AG04450 (cell line): ENCODE measurements at regions of chr3 and their contacts with region 1.

Region 1: DNA sequence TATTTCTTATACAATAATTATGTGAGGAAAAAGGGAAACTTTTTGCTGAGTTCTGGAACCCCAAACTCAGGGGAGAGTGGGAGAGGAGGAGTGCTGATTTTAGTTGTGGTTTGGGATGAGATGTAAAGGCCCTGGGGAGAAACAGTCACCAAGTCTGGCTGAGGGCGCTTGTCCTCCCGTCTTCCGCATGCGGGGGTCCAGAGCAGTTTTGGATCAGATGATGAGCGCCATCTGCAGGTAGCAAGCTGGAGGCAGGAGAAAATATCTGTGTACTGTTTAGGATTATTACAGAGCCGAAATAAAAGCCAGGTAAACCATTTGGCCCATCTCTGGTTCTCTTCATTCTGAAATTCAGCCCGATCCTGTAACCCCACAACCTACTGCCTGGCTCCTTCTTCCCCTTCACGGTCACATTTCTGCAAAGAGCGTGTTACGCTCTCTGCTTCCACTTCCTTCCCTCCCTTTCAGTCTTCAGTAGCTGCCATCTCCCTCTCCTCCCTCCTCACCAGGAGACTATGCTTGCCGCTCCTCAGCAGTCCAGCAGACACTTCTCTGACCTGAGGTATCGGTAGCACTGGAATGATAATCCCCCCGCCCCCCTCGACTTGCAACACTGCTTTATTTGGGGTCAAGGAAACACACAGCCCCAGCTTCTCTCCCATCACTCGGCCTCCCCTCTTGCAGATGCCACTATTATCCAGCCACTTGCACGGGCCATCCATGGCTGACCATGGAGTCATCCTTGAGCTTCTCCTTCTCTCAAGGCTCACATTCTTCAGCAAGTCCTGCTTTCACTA is 1.4 kb upstream of the PARP14 start:
- DNase-seq: peak; percentile 55
- H3K4me3 ChIP-seq: peak overlapping the region; percentile 43
- H3K27ac ChIP-seq: peak overlapping the region; percentile 34
- H3K27me3 ChIP-seq: no peaks in the 10 kb centered on the region
- CTCF ChIP-seq: peak; percentile 87

Region 2: DNA sequence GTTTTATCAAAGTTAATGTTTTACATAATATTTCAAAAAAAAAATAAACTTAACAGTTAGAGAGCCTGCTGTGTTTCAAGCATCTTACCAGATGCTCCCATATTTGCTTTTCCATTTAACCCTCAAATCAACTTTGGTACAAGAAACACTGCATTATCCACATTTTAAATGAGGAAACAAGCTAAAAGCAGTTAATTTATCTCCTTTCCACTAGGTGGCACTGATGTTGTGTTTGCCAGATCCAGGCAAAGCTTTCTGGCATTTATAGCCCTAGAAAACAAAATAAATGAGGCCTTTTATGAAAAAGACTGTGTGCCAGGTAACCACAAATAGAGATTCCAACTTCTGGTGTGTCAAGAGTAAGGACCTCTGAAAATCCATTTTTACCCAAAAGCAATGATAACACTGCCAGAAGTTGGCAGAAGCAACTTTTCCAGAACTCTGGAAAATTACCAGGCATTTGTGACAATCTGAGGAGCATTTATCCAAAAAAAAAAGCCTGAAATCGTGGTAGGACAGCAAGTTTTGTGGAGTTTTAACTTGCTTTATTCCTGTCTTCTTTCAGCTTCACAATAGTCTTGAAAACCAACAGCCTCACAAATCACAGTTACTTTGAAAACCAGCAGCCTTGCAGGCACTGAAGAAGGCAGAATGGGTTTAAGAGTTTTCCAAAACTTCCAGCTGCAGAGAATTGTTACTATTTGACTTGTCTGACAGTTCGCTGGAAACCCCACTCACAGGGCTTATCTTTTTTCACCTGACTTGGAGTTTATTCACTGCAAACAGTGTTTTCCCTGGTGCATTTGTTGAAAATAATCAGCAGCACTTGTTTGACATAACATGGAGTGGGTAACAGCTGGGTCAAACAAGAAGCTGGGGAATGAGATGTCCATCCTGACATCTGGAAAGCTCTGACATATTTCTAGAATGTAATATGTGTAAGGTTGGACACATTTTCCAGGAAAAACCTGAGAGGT is 286.1 kb before region 1 on chr3:
- CTCF ChIA-PET with region 1: interaction called, 46 read pairs
- POLR2A ChIA-PET with region 1: no interaction called
- DNase-seq: no peak
- H3K4me3 ChIP-seq: no peak overlapping the region
- H3K27ac ChIP-seq: no peak overlapping the region
- H3K27me3 ChIP-seq: no peaks in the 10 kb centered on the region
- CTCF ChIP-seq: peak; percentile 82

Region 3: DNA sequence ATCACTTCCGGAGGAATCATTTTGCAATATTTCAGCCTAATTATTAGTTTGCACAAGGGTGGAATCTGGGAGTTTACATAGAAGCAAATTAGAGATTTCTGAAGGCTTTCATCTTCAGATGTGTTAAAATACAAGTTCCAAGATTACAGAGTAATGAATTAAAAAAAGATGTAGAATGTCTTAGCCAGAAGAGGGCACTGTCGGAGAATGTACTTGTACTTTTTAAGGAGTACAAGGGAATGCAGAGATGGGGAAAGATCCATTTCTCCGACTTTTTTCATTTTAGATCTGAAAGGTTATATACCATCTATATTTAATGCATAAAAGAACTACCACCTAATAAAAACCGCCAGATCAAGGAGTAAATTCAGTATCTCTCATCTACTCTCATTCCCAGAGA is 220.3 kb before region 1 on chr3:
- CTCF ChIA-PET with region 1: interaction called, 25 read pairs
- POLR2A ChIA-PET with region 1: interaction called, 3 read pairs
- DNase-seq: peak; percentile 27
- H3K4me3 ChIP-seq: no peak overlapping the region
- H3K27ac ChIP-seq: no peak overlapping the region
- H3K27me3 ChIP-seq: no peaks in the 10 kb centered on the region
- CTCF ChIP-seq: peak; percentile 57

Region 4: GRCh38 chr3:122621112-122621511 is 58.2 kb before region 1 on chr3:
- CTCF ChIA-PET with region 1: interaction called, 12 read pairs
- POLR2A ChIA-PET with region 1: no interaction called
- DNase-seq: no peak
- H3K4me3 ChIP-seq: no peak overlapping the region
- H3K27ac ChIP-seq: no peak overlapping the region
- H3K27me3 ChIP-seq: peaks cover 41% of the 10 kb centered on the region
- CTCF ChIP-seq: no peak

Region 5: GRCh38 chr3:122725106-122725505 is 45.8 kb after region 1 on chr3:
- CTCF ChIA-PET with region 1: no interaction called
- POLR2A ChIA-PET with region 1: no interaction called
- DNase-seq: no peak
- H3K4me3 ChIP-seq: no peak overlapping the region
- H3K27ac ChIP-seq: no peak overlapping the region
- H3K27me3 ChIP-seq: no peaks in the 10 kb centered on the region
- CTCF ChIP-seq: no peak

Region 6: GRCh38 chr3:122745346-122746021 is 66.2 kb after region 1 on chr3:
- CTCF ChIA-PET with region 1: no interaction called
- POLR2A ChIA-PET with region 1: no interaction called
- DNase-seq: peak; percentile 56
- H3K4me3 ChIP-seq: no peak overlapping the region
- H3K27ac ChIP-seq: peak overlapping the region; percentile 78
- H3K27me3 ChIP-seq: no peaks in the 10 kb centered on the region
- CTCF ChIP-seq: no peak

Region 7: DNA sequence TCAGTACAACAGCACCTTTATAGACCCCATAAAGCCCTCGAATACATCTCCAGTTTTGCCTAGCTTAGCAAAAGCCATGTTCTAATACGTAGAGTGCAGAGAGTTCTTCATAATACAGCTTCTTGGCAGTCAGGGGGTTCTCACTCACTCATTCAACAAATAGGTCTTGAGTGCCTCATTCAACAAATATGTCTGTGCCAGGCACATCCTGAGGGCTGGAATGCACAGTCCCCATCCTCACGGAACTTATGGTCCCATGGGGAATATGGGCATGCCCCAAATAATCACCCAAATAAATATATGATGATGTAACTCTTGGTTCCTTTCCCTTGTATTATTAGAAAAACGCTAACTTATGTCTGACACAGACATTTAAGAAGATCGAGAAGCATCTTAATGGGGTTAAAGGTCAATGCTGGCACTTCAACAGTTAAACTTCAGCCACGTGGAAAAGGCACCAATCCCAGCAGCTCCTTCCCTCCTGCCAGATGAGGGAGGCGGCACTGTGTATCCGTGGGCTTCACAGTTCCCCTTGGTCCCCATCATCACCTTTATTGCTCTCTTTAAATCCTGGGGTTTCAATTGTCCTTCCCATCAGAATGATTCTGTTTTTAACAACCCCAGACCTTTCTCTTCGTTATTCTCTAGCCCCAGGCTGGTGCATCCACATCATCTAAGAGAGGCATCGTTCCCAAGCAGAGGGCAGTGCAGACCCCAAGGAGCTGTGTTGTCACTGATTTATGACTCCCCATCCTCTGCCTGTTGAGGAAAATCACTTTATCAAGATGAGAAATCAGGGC is 367.2 kb after region 1 on chr3:
- CTCF ChIA-PET with region 1: no interaction called
- POLR2A ChIA-PET with region 1: no interaction called
- DNase-seq: no peak
- H3K4me3 ChIP-seq: no peak overlapping the region
- H3K27ac ChIP-seq: no peak overlapping the region
- H3K27me3 ChIP-seq: peaks cover 29% of the 10 kb centered on the region
- CTCF ChIP-seq: no peak